Prostate gland (tissue), 2 donors: ENCODE measurements at regions of chr3 and their contacts with region 1.

Region 1: GRCh38 chr3:129942296-129942695 is 32.2 kb upstream of the TRH start:
- DNase-seq: peak; percentile 27
- H3K4me3 ChIP-seq: no peak overlapping the region
- H3K27ac ChIP-seq: no peak overlapping the region
- H3K4me1 ChIP-seq: no peaks in the 10 kb centered on the region
- H3K27me3 ChIP-seq: no peaks in the 10 kb centered on the region
- CTCF ChIP-seq: peak; percentile 56 to 86 (median 67)
- POLR2A ChIP-seq: no peak

Region 2: DNA sequence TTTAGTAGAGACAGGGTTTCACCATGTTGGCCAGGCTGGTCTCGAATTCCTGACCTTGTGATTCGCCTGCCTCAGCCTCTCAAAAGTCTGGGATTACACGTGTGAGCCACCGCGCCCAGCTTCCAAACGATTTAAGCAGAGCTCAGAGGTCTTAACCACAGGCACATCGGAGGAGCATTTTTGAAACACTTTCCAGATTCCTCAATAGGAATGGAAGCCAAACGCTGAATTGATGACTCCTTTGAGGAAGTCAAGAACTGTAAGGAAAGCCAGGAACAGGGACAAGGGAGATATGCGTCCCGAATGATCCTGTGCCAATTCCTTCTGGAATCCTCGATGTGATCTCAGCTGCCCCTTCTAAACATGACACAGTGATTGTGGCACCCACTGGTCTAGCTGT is 72.2 kb after region 1 on chr3:
- intact Hi-C with region 1: loop called (anchors 10 kb)
- DNase-seq: no peak
- H3K4me3 ChIP-seq: no peak overlapping the region
- H3K27ac ChIP-seq: no peak overlapping the region
- H3K4me1 ChIP-seq: no peaks in the 10 kb centered on the region
- H3K27me3 ChIP-seq: no peaks in the 10 kb centered on the region
- CTCF ChIP-seq: no peak
- POLR2A ChIP-seq: no peak

Region 3: DNA sequence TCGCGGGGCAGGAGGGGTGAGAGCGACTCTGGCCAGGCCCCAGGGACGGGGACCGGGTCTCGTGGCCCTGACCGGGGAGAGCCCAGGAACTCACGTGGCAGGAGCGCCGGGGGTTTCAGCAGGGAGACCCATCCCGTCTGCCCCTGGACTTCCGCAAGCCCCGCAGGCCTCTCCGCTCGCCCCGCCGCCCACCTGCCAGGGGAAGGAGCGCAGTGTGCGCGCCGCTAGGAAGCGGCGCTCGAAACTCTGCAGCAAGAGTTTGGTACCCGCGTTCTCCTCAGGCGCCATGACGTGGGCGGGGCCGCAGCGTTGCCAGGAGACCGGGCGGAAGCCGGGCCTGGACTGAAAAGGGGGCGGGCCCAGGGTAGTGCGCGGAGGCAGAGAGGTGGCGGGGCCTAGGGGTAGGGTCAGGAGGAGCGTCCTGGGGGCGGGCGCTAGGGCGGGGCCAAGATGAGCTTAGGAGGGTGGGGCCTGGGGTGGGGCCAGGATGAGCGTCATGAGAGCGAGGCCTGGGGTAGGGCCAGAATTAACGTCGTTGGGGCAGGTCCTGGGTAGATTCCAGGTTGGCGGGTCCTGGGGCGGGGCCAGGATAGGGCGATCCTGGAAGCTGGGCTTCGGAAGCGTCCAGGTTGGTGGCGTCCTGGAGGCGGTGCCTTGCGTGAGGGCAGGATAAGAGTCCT is 169.0 kb after region 1 on chr3:
- intact Hi-C with region 1: no loop called
- DNase-seq: peak; percentile 99
- H3K4me3 ChIP-seq: peak overlapping the region; percentile 56 to 60
- H3K27ac ChIP-seq: peak overlapping the region; percentile 58 to 93
- H3K4me1 ChIP-seq: no peaks in the 10 kb centered on the region
- H3K27me3 ChIP-seq: no peaks in the 10 kb centered on the region
- CTCF ChIP-seq: no peak
- POLR2A ChIP-seq: peak; percentile 42